Tibial artery (tissue), 4 donors: ENCODE measurements at regions of chr16 and their contacts with region 1.

Region 1: DNA sequence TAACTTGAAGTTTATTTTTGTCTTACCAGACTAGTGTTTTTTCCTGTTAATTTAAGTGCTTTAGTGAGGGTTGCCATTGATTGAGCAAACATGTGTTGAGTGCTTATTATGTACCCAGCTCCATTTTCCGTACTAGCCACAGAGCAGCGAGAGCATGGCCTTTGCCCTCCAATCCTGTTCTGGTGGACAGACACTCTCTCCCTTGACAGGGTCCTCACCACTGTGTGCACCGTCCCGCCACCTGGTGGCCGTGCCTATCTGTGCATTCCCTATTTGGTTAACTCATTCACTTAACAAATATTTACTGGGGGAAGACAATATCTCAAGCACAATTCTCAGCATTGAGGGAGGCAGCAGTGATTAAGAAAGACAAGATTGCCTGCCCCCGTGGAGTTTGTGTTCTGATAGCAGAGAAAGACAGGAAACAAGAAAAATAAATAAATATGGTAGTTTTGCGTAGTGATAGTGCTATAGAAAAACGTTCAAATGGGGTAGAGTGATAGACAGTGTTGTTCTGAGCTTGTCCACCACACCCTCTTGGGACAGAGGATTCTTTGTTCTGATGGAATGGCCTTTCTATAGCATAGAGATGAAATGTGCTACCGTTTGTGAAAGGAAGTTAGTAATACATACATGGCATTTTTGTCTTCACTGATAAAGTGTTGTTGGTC is 13.0 kb downstream of the CDH13 start:
- DNase-seq: no peak
- H3K4me3 ChIP-seq: no peak overlapping the region
- H3K27ac ChIP-seq: no peak overlapping the region
- H3K4me1 ChIP-seq: peaks cover 0 to 17% (median 8%) of the 10 kb centered on the region in 4 donors
- H3K27me3 ChIP-seq: no peaks in the 10 kb centered on the region
- CTCF ChIP-seq: peak; percentile 45 to 49

Region 2: DNA sequence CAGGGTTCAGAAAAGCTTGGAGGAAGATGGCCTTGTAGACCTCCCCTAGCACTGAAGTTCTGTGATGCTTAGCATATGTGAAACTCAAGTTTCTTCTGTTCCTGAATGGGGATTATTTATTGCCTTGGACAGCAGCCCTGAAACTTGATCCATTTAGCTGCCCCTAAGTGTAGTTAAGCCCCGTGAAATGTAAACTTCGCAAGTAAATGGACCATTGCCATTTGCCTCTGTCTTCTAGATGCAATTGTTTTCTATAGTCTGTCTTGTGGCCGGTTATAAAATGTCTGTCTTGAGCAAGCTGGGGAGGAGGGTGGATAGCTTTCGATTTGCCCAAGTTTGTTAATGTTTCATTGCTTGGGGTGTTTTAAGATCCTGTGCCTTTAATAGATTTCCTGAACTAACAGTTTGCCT is 248.8 kb after region 1 on chr16:
- intact Hi-C with region 1: loop called (anchors 10 kb)
- DNase-seq: no peak
- H3K4me3 ChIP-seq: no peak overlapping the region
- H3K27ac ChIP-seq: peak overlapping the region in 1 of 2 donors; percentile 11
- H3K4me1 ChIP-seq: peaks cover 5 to 57% (median 19%) of the 10 kb centered on the region in 4 donors
- H3K27me3 ChIP-seq: no peaks in the 10 kb centered on the region
- CTCF ChIP-seq: no peak

Region 3: DNA sequence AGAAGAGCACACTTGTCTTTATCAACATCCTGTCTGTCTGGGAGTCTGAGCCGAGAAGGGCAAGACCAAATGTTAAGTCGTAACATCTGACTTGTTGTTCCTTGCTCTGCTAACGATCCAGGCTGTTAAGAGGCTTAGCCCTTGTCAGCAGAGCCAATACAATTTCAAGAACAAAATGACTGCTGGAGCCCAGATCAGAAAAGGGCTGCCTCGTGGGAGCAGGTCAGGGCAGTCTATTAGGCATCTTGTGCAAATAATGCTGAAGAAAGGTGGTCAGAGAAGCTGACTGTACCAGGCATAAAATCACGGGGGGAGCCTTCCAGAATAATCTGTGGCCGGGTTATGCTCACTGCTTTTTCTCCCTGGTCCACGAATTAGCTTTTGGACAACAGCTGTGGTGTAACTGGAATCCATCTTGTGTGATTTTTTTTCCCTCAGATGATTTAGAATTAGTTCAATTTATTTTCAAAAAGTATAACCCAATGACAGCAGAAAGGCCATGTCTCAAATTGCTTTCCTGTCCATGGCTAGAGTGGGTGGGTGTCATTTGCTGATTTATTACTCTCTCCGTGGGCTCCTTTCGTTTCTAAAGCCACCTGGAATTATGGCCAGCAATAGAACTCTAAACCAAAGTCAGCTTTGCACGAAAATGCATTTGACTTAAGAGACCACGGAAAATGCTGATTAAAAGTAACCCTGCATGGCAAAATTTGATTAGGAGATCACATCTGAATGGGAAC is 946.8 kb after region 1 on chr16:
- intact Hi-C with region 1: loop called (anchors 5 kb)
- DNase-seq: no peak
- H3K4me3 ChIP-seq: no peak overlapping the region
- H3K27ac ChIP-seq: no peak overlapping the region
- H3K4me1 ChIP-seq: no peaks in the 10 kb centered on the region
- H3K27me3 ChIP-seq: no peaks in the 10 kb centered on the region
- CTCF ChIP-seq: no peak